H1 (cell line): ENCODE measurements at regions of chr3 and their contacts with region 1.

Region 1: GRCh38 chr3:28667646-28668621 is 319.3 kb upstream of the AZI2 start:
- DNase-seq: peak; percentile 49 to 82
- H3K4me3 ChIP-seq: no peak overlapping the region
- H3K27ac ChIP-seq: no peak overlapping the region
- H3K4me1 ChIP-seq: peaks cover 0 to 5% (median 0%) of the 10 kb centered on the region in 4 experiments; a peak in 2 of 7 replicates
- H3K27me3 ChIP-seq: no peaks in the 10 kb centered on the region
- CTCF ChIP-seq: peak; percentile 51 to 93 (median 80)
- EP300 ChIP-seq: no peak
- POLR2A ChIP-seq: no peak
- RAD21 ChIP-seq: peak; percentile 70 to 78

Region 2: GRCh38 chr3:28485164-28485563 is 182.8 kb before region 1 on chr3:
- CTCF ChIA-PET with region 1: no interaction called
- POLR2A ChIA-PET with region 1: no interaction called
- DNase-seq: no peak
- H3K4me3 ChIP-seq: no peak overlapping the region
- H3K27ac ChIP-seq: no peak overlapping the region
- H3K4me1 ChIP-seq: no peaks in the 10 kb centered on the region
- H3K27me3 ChIP-seq: no peaks in the 10 kb centered on the region
- CTCF ChIP-seq: no peak
- EP300 ChIP-seq: no peak
- POLR2A ChIP-seq: no peak
- RAD21 ChIP-seq: no peak

Region 3: GRCh38 chr3:28651159-28651558 is 16.8 kb before region 1 on chr3:
- CTCF ChIA-PET with region 1: interaction called, 15 read pairs
- POLR2A ChIA-PET with region 1: no interaction called
- DNase-seq: no peak
- H3K4me3 ChIP-seq: no peak overlapping the region
- H3K27ac ChIP-seq: no peak overlapping the region
- H3K4me1 ChIP-seq: no peaks in the 10 kb centered on the region
- H3K27me3 ChIP-seq: peaks cover 0 to 1% (median 0%) of the 10 kb centered on the region in 4 experiments; a peak in 1 of 7 replicates
- CTCF ChIP-seq: no peak
- EP300 ChIP-seq: no peak
- POLR2A ChIP-seq: no peak
- RAD21 ChIP-seq: no peak

Region 4: GRCh38 chr3:28699283-28699682 is 31.3 kb after region 1 on chr3:
- CTCF ChIA-PET with region 1: interaction called, 16 read pairs
- POLR2A ChIA-PET with region 1: no interaction called
- DNase-seq: no peak
- H3K4me3 ChIP-seq: no peak overlapping the region
- H3K27ac ChIP-seq: no peak overlapping the region
- H3K4me1 ChIP-seq: peaks cover 0 to 6% (median 5%) of the 10 kb centered on the region in 4 experiments; a peak in 3 of 7 replicates
- H3K27me3 ChIP-seq: no peaks in the 10 kb centered on the region
- CTCF ChIP-seq: no peak
- EP300 ChIP-seq: no peak
- POLR2A ChIP-seq: no peak
- RAD21 ChIP-seq: no peak

Region 5: GRCh38 chr3:28726840-28727239 is 58.9 kb after region 1 on chr3:
- CTCF ChIA-PET with region 1: interaction called, 22 read pairs
- POLR2A ChIA-PET with region 1: no interaction called
- DNase-seq: peak; percentile 56 to 69
- H3K4me3 ChIP-seq: no peak overlapping the region
- H3K27ac ChIP-seq: no peak overlapping the region
- H3K4me1 ChIP-seq: no peaks in the 10 kb centered on the region
- H3K27me3 ChIP-seq: no peaks in the 10 kb centered on the region
- CTCF ChIP-seq: peak; percentile 32 to 79 (median 77)
- EP300 ChIP-seq: no peak
- POLR2A ChIP-seq: no peak
- RAD21 ChIP-seq: peak; percentile 85 to 90